Tibial artery (tissue), 4 donors: ENCODE measurements at regions of chr4 and their contacts with region 1.

Region 1: GRCh38 chr4:10204401-10205058 is 87.9 kb upstream of the WDR1 start:
- DNase-seq: no peak
- H3K4me3 ChIP-seq: no peak overlapping the region
- H3K27ac ChIP-seq: no peak overlapping the region
- H3K4me1 ChIP-seq: no peaks in the 10 kb centered on the region
- H3K27me3 ChIP-seq: no peaks in the 10 kb centered on the region
- CTCF ChIP-seq: no peak

Region 2: GRCh38 chr4:10239982-10240654 is 35.6 kb after region 1 on chr4:
- intact Hi-C with region 1: loop called (anchors 2 kb)
- DNase-seq: no peak
- H3K4me3 ChIP-seq: no peak overlapping the region
- H3K27ac ChIP-seq: no peak overlapping the region
- H3K4me1 ChIP-seq: peaks cover 0 to 5% (median under 1%) of the 10 kb centered on the region in 4 donors
- H3K27me3 ChIP-seq: no peaks in the 10 kb centered on the region
- CTCF ChIP-seq: no peak